ENCODE measurements at regions of chr5 and their contacts with region 1.

Region 1: GRCh38 chr5:40688127-40688761 is 8.5 kb downstream of the PTGER4 start:
- DNase-seq: peak; percentile 94
- H3K4me3 ChIP-seq: peak overlapping the region in 1 of 3 experiments; percentile 14
- H3K27ac ChIP-seq: peak overlapping the region; percentile 83
- H3K4me1 ChIP-seq: peaks cover 64% of the 10 kb centered on the region
- H3K27me3 ChIP-seq: no peaks in the 10 kb centered on the region
- CTCF ChIP-seq: peak; percentile 68 to 78
- POLR2A ChIP-seq: no peak

Region 2: GRCh38 chr5:39578887-39579497 is 1109.3 kb before region 1 on chr5:
- CTCF ChIA-PET with region 1: interaction called, 4 read pairs
- POLR2A ChIA-PET with region 1: no interaction called
- dilution Hi-C with region 1: no loop called
- intact Hi-C with region 1: loop called (anchors 1 kb)
- DNase-seq: peak; percentile 38
- H3K4me3 ChIP-seq: no peak overlapping the region
- H3K27ac ChIP-seq: no peak overlapping the region
- H3K4me1 ChIP-seq: peaks cover 4% of the 10 kb centered on the region
- H3K27me3 ChIP-seq: no peaks in the 10 kb centered on the region
- CTCF ChIP-seq: peak; percentile 18
- POLR2A ChIP-seq: no peak

Region 3: GRCh38 chr5:39599721-39600431 is 1088.4 kb before region 1 on chr5:
- CTCF ChIA-PET with region 1: interaction called, 3 read pairs
- POLR2A ChIA-PET with region 1: no interaction called
- dilution Hi-C with region 1: no loop called
- intact Hi-C with region 1: loop called (anchors 5 kb)
- DNase-seq: peak; percentile 43
- H3K4me3 ChIP-seq: no peak overlapping the region
- H3K27ac ChIP-seq: no peak overlapping the region
- H3K4me1 ChIP-seq: no peaks in the 10 kb centered on the region
- H3K27me3 ChIP-seq: no peaks in the 10 kb centered on the region
- CTCF ChIP-seq: peak; percentile 21 to 28
- POLR2A ChIP-seq: no peak

Region 4: DNA sequence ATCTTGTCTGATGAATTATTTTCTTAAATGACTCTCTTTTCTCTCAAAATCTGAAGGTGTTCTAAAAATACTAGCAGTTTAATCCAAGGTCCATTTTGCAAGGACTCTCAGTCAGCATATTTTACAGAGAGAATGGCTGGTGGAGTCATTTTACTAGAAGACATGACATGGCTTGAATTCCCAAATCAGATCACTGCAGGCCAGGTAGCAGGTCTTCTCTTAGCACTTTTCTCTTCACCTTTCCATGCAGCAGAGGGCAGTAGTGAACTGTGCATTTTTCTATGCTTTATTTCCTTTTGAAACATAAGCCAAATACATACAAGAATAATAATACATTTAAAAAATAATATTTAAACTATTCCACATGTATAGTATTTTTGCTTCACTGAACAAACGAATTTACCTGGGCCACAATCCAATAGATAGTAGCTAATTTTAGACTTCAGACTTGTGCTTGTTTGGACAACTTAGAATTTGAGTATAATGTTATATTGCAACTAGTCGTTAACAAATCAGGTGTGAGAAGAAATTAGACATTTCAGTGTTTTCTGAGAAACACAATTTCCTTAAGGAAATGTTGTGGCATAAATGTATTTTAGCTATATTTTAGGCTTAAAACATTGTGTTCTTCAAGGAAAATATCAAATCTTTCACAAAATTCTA is 974.1 kb before region 1 on chr5:
- CTCF ChIA-PET with region 1: interaction called, 62 read pairs
- POLR2A ChIA-PET with region 1: no interaction called
- dilution Hi-C with region 1: no loop called
- intact Hi-C with region 1: loop called (anchors 1 kb)
- DNase-seq: peak; percentile 84
- H3K4me3 ChIP-seq: no peak overlapping the region
- H3K27ac ChIP-seq: no peak overlapping the region
- H3K4me1 ChIP-seq: no peaks in the 10 kb centered on the region
- H3K27me3 ChIP-seq: no peaks in the 10 kb centered on the region
- CTCF ChIP-seq: peak; percentile 42 to 65
- POLR2A ChIP-seq: no peak

Region 5: GRCh38 chr5:40021007-40021406 is 667.2 kb before region 1 on chr5:
- CTCF ChIA-PET with region 1: interaction called, 5 read pairs
- POLR2A ChIA-PET with region 1: no interaction called
- dilution Hi-C with region 1: no loop called
- intact Hi-C with region 1: loop called (anchors 1 kb)
- DNase-seq: peak; percentile 14
- H3K4me3 ChIP-seq: no peak overlapping the region
- H3K27ac ChIP-seq: no peak overlapping the region
- H3K4me1 ChIP-seq: no peaks in the 10 kb centered on the region
- H3K27me3 ChIP-seq: no peaks in the 10 kb centered on the region
- CTCF ChIP-seq: no peak
- POLR2A ChIP-seq: no peak

Region 6: DNA sequence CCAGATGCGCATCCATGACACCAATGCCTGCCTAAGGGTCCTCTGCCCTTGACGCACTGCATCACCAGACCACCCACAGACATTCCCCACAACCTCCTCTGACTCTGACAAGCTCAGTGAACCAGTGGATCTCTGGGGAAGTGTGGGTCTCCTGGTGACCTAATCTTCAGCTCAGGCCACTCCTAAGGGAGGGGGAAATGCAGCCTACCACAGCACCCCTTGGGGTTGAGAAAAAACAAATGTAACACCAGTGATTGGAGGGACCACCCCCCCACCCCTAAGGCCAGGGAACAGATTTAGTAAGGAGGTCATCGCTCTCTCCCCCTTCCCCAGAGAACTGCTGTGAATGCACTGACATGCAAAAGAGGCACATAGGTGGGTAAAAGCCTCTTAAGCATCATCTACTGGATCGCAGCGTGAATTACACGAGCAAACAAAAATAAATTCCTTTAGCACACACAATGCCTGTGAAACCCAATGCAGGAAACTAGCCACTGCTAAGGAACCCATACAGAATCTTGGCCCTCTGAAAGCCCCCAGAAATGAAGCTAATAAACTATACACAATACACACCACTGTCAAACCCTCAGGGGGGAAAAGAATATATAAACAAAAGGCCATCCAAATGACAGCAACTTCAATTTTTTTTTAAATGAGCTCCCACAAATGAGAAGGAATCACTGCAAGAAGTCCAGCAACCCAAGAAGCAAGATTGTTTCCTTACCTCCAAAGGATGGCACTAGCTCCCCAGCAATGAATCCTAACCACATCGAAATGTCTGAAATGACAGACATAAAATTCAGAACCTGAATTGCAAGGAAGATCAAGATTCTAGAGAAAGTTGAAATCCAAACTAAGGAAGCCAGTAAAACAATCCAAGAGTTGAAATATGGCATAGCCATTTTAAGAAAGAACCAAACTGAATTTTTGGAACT is 522.2 kb before region 1 on chr5:
- CTCF ChIA-PET with region 1: interaction called, 65 read pairs
- POLR2A ChIA-PET with region 1: no interaction called
- dilution Hi-C with region 1: no loop called
- intact Hi-C with region 1: loop called (anchors 1 kb)
- DNase-seq: peak; percentile 44
- H3K4me3 ChIP-seq: no peak overlapping the region
- H3K27ac ChIP-seq: no peak overlapping the region
- H3K4me1 ChIP-seq: peaks cover 6% of the 10 kb centered on the region
- H3K27me3 ChIP-seq: no peaks in the 10 kb centered on the region
- CTCF ChIP-seq: peak in 1 of 2 donors; percentile 10
- POLR2A ChIP-seq: no peak

Region 7: DNA sequence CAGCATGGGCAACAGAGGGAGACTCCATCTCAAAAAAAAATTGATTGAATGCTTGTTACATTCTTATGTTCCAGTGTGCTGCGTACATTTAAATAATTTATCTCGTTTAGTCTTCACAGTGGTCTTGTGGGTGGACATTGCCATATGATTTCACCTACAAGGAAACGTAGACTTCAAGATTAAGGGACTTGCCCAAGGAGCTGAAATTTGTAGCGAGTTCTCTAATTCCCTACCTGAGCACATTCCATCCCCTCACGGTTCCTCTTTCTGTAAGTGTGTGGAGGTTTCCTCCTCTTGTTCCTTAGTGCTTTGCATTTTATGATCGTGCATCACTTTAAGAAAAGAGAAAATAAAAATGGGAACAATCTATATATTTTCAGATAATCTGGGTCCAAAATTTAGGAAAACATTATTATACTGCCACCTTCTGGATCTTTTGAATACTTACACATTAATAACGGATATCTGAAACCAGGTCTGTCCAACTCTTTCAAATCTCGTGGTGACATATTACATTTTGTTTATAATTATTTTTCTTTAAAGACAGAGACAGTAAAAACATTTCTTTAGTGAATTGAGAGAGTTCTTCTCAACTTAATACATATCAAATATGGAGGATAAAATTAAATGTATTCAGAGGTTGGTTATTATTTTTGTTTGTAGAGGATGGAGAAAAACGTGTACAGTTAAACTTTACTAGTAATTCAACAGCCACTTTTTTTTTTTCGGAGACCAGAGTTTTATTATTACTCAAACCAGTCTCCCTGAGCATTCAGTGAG is 191.1 kb after region 1 on chr5:
- CTCF ChIA-PET with region 1: interaction called, 5 read pairs
- POLR2A ChIA-PET with region 1: no interaction called
- dilution Hi-C with region 1: no loop called
- intact Hi-C with region 1: loop called (anchors 1 kb)
- DNase-seq: peak; percentile 52
- H3K4me3 ChIP-seq: no peak overlapping the region
- H3K27ac ChIP-seq: no peak overlapping the region
- H3K4me1 ChIP-seq: no peaks in the 10 kb centered on the region
- H3K27me3 ChIP-seq: no peaks in the 10 kb centered on the region
- CTCF ChIP-seq: no peak
- POLR2A ChIP-seq: no peak

Measured in endothelial cell of umbilical vein (primary cell).